MCF 10A (cell line): ENCODE measurements at regions of chr9 and their contacts with region 1.

Region 1: GRCh38 chr9:128296337-128297220 is 20.5 kb downstream of the SWI5 start:
- DNase-seq: no peak
- H3K4me3 Mint-ChIP-seq: no peak overlapping the region
- H3K27ac Mint-ChIP-seq: no peak overlapping the region
- H3K4me1 Mint-ChIP-seq: peaks cover 7% of the 10 kb centered on the region
- H3K27me3 Mint-ChIP-seq: no peaks in the 10 kb centered on the region
- CTCF ChIP-seq: no peak

Region 2: DNA sequence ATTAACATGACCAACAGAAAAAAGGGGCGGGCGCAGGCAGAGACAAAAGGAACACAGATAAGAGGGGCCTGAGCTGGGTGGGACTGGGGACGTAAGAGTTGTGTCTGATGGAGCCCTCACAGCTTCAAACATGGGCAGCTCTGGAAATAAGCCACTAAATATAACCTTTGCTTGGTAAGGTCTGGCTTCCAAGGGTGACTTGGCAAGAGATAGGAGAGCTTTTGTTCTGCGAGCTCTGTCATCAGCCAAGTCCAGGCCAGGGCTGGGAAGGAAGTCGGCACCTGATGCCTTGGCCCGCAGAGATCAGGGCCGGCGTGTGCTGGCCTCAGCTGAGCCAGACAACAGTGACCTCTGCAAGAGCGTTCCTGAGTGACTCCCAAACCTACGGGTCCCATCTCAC is 13.9 kb after region 1 on chr9:
- CTCF ChIA-PET with region 1: interaction called, 21 read pairs
- POLR2A ChIA-PET with region 1: interaction called, 12 read pairs
- intact Hi-C with region 1: no loop called
- DNase-seq: no peak
- H3K4me3 Mint-ChIP-seq: no peak overlapping the region
- H3K27ac Mint-ChIP-seq: no peak overlapping the region
- H3K4me1 Mint-ChIP-seq: no peaks in the 10 kb centered on the region
- H3K27me3 Mint-ChIP-seq: no peaks in the 10 kb centered on the region
- CTCF ChIP-seq: no peak

Region 3: DNA sequence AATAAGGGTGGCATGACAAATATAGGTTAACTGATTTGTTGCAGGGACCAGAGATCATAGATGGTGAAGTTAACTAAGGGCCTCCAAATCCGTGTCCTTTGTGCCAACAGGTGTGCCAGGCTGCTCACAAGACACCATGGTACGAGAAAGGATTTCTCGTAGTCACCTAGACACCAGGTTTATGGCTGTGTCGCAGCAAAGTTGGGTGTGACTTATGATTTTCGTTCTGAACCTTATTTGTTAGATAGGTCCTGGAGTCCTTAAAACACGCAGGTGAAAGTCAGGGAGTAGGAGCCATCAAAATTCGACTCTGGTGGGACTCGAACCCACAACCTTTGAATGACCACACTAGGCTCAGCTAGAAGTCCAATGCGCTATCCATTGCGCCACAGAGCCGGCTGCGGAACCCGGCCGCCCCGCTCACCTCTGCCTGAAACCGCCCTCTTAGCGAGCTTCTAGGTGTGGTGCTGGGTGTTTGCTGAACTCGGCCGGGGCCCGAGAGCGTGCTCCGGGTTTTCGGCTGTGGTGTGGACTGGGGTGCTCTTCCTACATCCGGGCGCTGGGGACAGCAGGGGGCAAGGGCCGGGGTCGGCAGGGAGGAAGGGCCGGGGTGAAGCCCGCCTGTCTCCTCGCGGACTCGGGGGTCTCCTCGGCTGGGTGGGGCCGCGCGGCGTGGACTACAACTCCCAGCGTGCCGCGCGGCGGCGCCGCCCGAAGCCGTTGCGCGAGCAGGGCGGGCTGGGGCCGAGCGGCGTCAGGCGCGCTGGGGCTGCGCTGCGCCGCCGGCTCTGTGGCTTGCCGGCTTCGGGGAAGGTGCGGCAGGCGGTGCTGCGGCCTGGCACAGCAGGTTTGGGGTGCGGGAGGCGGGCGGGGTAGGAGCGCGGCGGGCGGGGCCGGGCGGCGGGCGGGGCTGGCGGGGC is 43.5 kb after region 1 on chr9 and contains the start of gene SLC27A4:
- CTCF ChIA-PET with region 1: interaction called, 74 read pairs
- POLR2A ChIA-PET with region 1: interaction called, 21 read pairs
- intact Hi-C with region 1: no loop called
- DNase-seq: peak; percentile 91
- H3K4me3 Mint-ChIP-seq: peak within 1 kb of the TSS; percentile 92
- H3K27ac Mint-ChIP-seq: peak within 1 kb of the TSS; percentile 93
- H3K4me1 Mint-ChIP-seq: peaks cover 6% of the 10 kb centered on the region
- H3K27me3 Mint-ChIP-seq: no peaks in the 10 kb centered on the region
- CTCF ChIP-seq: no peak
- total RNA-seq, gene SLC27A4: 17.0 and 18.8 TPM in 2 replicates

Region 4: DNA sequence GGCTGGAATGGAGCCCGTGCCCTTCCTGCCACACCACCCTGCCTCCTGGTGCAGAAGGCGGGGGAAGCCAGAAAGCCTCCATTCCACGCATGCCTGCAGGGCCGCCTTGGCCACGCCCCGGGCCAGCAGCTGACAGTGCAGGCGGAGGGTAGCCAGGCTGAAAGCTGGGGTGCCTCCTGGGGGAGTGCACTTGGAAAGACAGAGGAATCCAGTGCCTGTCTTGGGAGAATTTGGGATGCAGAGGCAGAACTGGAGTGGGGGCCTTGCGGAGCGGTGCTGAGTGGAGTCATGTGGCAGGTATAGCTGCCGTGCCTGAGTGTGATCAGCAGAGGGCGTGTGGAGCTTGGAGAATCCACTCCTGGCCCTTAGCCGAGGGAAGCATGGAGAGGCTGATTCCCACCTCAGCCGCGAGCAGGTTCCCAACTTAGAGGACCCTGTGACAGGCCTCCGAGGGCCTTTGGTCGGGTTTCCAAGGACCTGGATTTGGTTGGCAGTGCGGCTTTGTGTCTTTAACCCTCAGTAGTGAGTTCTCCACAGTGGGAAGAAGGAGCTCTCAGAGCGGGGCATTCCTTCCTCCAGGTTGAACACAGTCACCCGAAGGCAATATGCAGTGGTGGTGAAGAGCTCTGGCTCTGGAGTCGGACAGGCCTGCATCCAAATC is 65.5 kb after region 1 on chr9:
- CTCF ChIA-PET with region 1: interaction called, 21 read pairs
- POLR2A ChIA-PET with region 1: interaction called, 5 read pairs
- intact Hi-C with region 1: loop called (anchors 1 kb)
- DNase-seq: peak; percentile 86
- H3K4me3 Mint-ChIP-seq: peak overlapping the region; percentile 82
- H3K27ac Mint-ChIP-seq: no peak overlapping the region
- H3K4me1 Mint-ChIP-seq: peaks cover 6% of the 10 kb centered on the region
- H3K27me3 Mint-ChIP-seq: no peaks in the 10 kb centered on the region
- CTCF ChIP-seq: peak; percentile 87

Region 5: GRCh38 chr9:128455849-128456612 is 159.5 kb after region 1 on chr9 and contains the start of gene ODF2:
- CTCF ChIA-PET with region 1: no interaction called
- POLR2A ChIA-PET with region 1: no interaction called
- intact Hi-C with region 1: loop called (anchors 1 kb)
- DNase-seq: peak; percentile 95
- H3K4me3 Mint-ChIP-seq: peak within 1 kb of the TSS; percentile 98
- H3K27ac Mint-ChIP-seq: peak within 1 kb of the TSS; percentile 96
- H3K4me1 Mint-ChIP-seq: no peaks in the 10 kb centered on the region
- H3K27me3 Mint-ChIP-seq: no peaks in the 10 kb centered on the region
- CTCF ChIP-seq: no peak
- total RNA-seq, gene ODF2: 34.4 and 37.3 TPM in 2 replicates